Dorsolateral prefrontal cortex (tissue), 120 donors: ENCODE measurements at regions of chr12 and their contacts with region 1.

Region 1: DNA sequence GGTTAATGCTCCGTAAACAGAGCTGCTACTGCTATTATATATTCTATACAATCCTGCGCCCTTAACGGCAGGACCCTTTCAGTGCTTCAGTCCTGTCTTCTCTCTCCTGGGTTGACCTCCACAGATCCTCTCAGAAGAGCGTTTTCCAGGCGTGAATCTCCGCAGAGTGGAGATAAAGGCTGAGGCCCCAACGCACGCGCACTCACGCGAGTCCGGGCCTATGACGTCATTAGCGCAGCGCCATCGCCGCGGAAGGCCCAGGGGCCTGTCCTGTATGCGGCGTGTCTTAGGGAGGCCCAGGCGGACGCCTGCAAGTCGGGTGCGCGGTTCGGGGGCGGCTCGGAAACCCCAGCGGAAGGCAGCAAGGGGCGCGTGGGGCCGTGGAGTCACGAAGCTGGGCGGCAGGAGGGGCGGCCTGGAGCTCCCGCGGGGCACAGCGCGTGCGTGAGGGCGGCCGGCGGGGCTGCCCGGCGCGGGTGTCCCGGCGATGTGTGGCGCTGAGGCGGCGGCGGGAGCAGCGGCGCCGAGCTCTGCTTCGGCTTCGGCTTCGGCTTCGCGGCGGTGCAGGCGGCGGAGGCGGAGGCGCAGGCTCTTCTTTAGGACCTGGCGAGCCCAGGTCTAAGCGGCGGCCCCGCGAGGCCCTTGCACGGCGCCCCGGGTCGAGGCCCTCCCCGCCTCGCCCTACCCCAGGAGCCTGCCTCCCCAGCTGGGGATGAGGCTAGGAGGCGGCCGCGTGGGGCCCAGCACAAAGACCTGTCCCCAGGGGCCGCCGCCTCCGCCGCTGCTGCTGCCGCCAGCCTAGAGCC is at the start of gene MAPKAPK5:
- DNase-seq: peak; percentile 83 to 93 (median 88)
- H3K4me3 ChIP-seq: peak within 1 kb of the TSS; percentile 67 to 100 (median 93)
- H3K27ac ChIP-seq: peak within 1 kb of the TSS in 58 of 59 donors; percentile 60 to 99 (median 92)
- H3K27me3 ChIP-seq: no peaks in the 10 kb centered on the region
- CTCF ChIP-seq: peak in 33 of 56 donors; percentile 4 to 55 (median 32)
- total RNA-seq, gene MAPKAPK5: 38.5 to 72.8 (median 54.5) TPM

Region 2: DNA sequence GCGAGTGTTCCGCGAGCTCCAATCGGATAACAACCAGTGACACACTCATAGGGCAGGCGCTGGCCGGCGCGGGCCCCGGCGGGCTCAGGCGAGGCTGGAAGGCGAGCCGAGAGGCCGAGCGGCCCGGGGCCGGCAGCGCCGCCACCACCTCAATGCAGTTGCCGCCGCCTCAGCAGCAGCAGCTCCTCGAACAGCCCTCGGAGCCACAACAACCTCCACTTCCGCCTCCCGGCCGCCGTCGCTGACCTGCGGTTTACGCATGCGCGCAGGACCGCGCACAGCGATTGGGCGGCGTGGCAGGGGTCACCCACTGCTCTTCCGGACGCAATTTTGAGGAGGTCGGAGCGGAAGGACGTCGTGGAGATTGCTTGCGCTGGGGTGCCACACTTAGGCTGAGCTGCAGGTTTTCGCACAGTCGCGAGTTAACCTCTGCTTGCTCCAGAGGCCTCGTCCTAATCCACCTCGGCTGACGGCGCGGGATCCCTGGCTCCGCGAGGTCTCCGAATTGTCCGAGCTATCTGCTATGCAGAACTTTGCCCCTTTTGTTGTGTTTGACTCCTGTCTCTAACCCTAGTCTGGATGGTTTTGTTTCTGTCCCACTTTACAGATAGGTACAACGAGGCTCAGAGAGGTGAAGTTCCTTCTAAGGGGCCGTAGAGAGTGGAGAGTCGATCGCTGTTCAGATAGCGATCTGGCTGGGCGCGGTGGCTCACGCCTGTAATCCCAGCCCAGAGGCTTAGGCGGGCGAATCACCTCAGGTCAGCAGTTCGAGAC is 156.0 kb before region 1 on chr12 and contains the starts of genes ACAD10 and BRAP:
- intact Hi-C with region 1: loop called in 1 of 2 experiments (anchors 10 kb)
- DNase-seq: peak; percentile 83 to 95 (median 89)
- H3K4me3 ChIP-seq: peak within 1 kb of the TSS; percentile 64 to 100 (median 96)
- H3K27ac ChIP-seq: peak within 1 kb of the TSS; percentile 5 to 93 (median 80)
- H3K27me3 ChIP-seq: no peaks in the 10 kb centered on the region
- CTCF ChIP-seq: peak in 40 of 56 donors; percentile 6 to 63 (median 40)
- total RNA-seq, gene ACAD10: 19.3 to 49.9 (median 31.8) TPM
- total RNA-seq, gene BRAP: 20.6 to 31.0 (median 25.6) TPM

Region 3: DNA sequence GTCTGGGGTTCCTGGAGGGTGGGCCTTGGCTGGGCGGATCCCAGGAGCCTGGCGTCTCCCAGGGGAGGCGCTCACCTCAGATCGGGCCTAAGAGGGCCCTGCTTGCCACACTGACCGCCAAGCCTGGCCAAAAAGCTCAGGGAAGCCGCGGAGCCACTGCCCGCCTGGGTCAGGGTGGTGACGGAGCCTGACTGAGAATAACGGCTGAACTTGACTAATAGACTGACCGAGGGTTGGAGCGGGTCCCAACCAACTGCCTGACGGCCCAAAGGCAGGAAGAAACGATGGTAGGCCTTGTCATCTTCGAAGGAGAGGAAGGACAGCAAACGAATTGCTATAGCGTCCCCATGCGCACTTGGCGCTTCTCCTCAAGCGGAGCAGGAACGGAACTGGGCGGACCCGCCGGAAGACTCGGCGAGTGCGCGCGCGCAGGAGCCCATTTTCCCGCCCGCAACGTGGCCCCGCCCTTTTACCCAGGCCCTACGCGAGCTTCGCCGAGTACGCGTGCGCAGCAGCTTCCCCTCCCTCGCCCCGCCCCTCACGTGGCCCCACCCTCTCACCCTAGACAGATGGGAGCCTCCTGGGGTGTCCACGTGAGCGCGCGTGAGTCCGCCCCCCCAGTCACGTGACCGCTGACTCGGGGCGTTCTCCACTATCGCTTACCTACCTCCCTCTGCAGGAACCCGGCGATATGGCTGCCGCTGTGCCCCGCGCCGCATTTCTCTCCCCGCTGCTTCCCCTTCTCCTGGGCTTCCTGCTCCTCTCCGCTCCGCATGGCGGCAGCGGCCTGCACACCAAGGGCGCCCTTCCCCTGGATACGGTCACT is 171.0 kb after region 1 on chr12 and contains the starts of genes ERP29 and TMEM116:
- intact Hi-C with region 1: loop called (anchors 2 to 5 kb)
- DNase-seq: peak; percentile 99 to 100 (median 99)
- H3K4me3 ChIP-seq: peak within 1 kb of the TSS; percentile 50 to 100 (median 95)
- H3K27ac ChIP-seq: peak within 1 kb of the TSS; percentile 74 to 99 (median 95)
- H3K27me3 ChIP-seq: no peaks in the 10 kb centered on the region
- CTCF ChIP-seq: peak; percentile 8 to 74 (median 51)
- total RNA-seq, gene ERP29: 31.1 to 63.4 (median 46.7) TPM
- total RNA-seq, gene TMEM116: 13.7 to 34.8 (median 21.9) TPM

Region 4: GRCh38 chr12:112108201-112109079 is 266.5 kb after region 1 on chr12 and contains the start of gene NAA25:
- intact Hi-C with region 1: loop called in 1 of 2 experiments (anchors 10 kb)
- DNase-seq: peak; percentile 83 to 91 (median 86)
- H3K4me3 ChIP-seq: peak within 1 kb of the TSS; percentile 67 to 99 (median 87)
- H3K27ac ChIP-seq: peak within 1 kb of the TSS; percentile 75 to 98 (median 94)
- H3K27me3 ChIP-seq: no peaks in the 10 kb centered on the region
- CTCF ChIP-seq: peak in 2 of 56 donors; percentile 6 to 12
- total RNA-seq, gene NAA25: 24.6 to 79.2 (median 44.6) TPM